Activated B cell treated with CpG ODN at 0.5 μM for 24 hours (primary cell): ENCODE measurements at regions of chr4 and their contacts with region 1.

Region 1: DNA sequence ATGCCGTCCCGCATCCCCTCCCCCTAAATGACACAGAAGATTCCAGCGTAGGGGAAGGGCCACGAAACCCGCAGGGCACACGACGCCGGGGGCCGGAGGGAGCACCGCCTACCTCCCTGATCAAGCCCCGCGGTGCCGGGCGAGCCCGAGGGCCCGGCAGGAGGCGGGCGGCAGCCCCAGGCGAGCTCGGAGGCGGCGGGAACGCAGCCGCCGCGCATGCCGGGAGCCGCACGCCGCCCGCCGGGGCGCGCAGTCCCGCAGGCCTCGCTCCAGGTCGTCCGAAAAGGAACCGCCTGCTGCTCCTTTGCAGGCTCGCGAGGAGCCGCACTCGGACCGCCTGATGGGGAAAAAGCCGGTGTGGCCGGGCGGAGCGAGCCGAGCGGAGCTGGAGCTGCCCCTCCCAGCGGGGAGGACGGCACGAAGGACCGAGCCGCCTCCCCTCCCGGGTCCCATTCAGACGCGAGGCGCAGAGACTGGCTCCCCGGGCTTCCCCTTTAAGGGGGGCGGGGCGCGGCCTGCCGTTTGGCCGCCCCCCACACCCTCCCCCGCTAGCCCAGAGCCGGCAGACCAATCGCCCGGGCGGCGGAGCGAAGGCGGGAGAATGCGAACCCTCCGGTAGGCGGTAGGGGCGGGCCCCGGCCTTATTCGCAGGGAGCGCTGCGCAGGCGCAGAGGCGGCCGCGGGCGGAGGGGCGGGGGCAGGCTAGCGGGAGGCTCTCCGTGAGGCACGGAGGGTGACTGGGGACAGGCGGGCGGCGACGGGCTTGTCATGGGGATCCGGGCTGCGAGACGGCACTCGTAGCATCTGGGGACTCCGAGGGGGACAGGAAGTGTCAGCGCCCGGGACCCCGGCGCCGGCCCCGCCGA is 561 bp upstream of the ING2 start:
- DNase-seq: peak; percentile 100
- ATAC-seq: peak; percentile 82
- H3K4me3 Mint-ChIP-seq: peak overlapping the region; percentile 96
- H3K27ac Mint-ChIP-seq: peak overlapping the region; percentile 90
- H3K4me1 Mint-ChIP-seq: peaks cover 14% of the 10 kb centered on the region
- H3K27me3 Mint-ChIP-seq: no peaks in the 10 kb centered on the region
- CTCF ChIP-seq: no peak

Region 2: GRCh38 chr4:183407128-183407585 is 97.1 kb before region 1 on chr4:
- CTCF ChIA-PET with region 1: interaction called, 4 read pairs
- POLR2A ChIA-PET with region 1: no interaction called
- intact Hi-C with region 1: loop called (anchors 1 kb)
- DNase-seq: peak; percentile 90
- ATAC-seq: peak; percentile 99
- H3K4me3 Mint-ChIP-seq: peak overlapping the region; percentile 79
- H3K27ac Mint-ChIP-seq: peak overlapping the region; percentile 35
- H3K4me1 Mint-ChIP-seq: peaks cover 15% of the 10 kb centered on the region
- H3K27me3 Mint-ChIP-seq: no peaks in the 10 kb centered on the region
- CTCF ChIP-seq: no peak

Region 3: GRCh38 chr4:183659029-183659871 is 155.0 kb after region 1 on chr4 and contains the starts of genes RWDD4 and TRAPPC11:
- CTCF ChIA-PET with region 1: interaction called, 3 read pairs
- POLR2A ChIA-PET with region 1: interaction called, 6 read pairs
- intact Hi-C with region 1: loop called (anchors 1 kb)
- DNase-seq: peak; percentile 87
- ATAC-seq: peak; percentile 98
- H3K4me3 Mint-ChIP-seq: peak within 1 kb of the TSS; percentile 93
- H3K27ac Mint-ChIP-seq: peak within 1 kb of the TSS; percentile 92
- H3K4me1 Mint-ChIP-seq: peaks cover 33% of the 10 kb centered on the region
- H3K27me3 Mint-ChIP-seq: no peaks in the 10 kb centered on the region
- CTCF ChIP-seq: no peak
- total RNA-seq, gene RWDD4: 14.6 and 15.4 TPM in 2 replicates
- total RNA-seq, gene TRAPPC11: 42.9 and 45.2 TPM in 2 replicates

Region 4: GRCh38 chr4:184417802-184418511 is 913.7 kb after region 1 on chr4:
- CTCF ChIA-PET with region 1: no interaction called
- POLR2A ChIA-PET with region 1: no interaction called
- intact Hi-C with region 1: loop called (anchors 10 kb)
- DNase-seq: no peak
- ATAC-seq: peak; percentile 65
- H3K4me3 Mint-ChIP-seq: peak overlapping the region; percentile 55
- H3K27ac Mint-ChIP-seq: peak overlapping the region; percentile 89
- H3K4me1 Mint-ChIP-seq: peaks cover 81% of the 10 kb centered on the region
- H3K27me3 Mint-ChIP-seq: no peaks in the 10 kb centered on the region
- CTCF ChIP-seq: no peak

Region 5: DNA sequence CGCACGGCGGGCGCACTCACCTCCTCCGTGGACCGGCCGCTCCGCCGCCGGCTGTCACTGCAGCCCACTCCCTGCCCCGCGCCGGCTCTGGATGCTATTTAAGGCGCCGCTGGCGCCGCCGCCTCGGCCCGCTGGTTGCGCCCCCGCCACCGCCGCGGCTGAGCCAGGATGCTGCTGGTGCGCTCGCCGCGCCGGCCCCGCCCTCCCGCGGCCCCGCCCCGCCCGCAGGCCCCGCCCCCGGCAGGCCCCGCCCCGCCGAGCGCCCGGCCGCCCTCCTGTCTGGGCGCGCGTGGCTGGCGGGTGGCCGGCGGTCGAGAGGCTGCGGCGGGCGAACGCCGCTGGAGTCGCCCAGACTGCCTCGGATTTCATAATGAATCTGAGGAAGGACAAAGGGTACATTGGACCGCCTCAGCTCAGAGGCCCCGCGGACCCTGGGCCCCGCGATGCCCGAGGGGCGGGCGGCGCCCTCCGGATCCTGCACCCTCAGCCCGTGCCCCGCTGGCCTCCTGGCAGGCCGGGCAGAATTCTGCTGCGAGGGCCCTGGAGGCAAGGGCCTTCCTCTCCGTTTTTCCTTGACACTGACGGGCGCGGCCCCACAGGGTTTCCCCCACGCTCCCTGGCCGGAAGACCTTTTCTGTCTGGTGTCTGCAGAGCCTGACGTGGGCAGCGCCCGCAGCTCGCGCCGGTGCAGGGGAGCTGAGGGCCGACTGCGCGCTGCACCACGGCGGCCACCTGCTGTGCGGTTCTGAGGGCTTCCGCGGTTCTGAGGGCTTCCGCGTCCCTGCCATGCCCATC is 1321.8 kb after region 1 on chr4 and contains the start of gene ACSL1:
- CTCF ChIA-PET with region 1: no interaction called
- POLR2A ChIA-PET with region 1: no interaction called
- intact Hi-C with region 1: loop called (anchors 10 kb)
- DNase-seq: peak; percentile 77
- ATAC-seq: peak; percentile 78
- H3K4me3 Mint-ChIP-seq: peak within 1 kb of the TSS; percentile 94
- H3K27ac Mint-ChIP-seq: peak within 1 kb of the TSS; percentile 91
- H3K4me1 Mint-ChIP-seq: peaks cover 42% of the 10 kb centered on the region
- H3K27me3 Mint-ChIP-seq: no peaks in the 10 kb centered on the region
- CTCF ChIP-seq: no peak
- total RNA-seq, gene ACSL1: 46.3 and 47.0 TPM in 2 replicates

Region 6: GRCh38 chr4:185203486-185204237 is 1699.4 kb after region 1 on chr4 and contains the start of gene CFAP97:
- CTCF ChIA-PET with region 1: no interaction called
- POLR2A ChIA-PET with region 1: no interaction called
- intact Hi-C with region 1: loop called (anchors 2 kb)
- DNase-seq: peak; percentile 82
- ATAC-seq: peak; percentile 81
- H3K4me3 Mint-ChIP-seq: peak within 1 kb of the TSS; percentile 93
- H3K27ac Mint-ChIP-seq: peak within 1 kb of the TSS; percentile 97
- H3K4me1 Mint-ChIP-seq: peaks cover 47% of the 10 kb centered on the region
- H3K27me3 Mint-ChIP-seq: no peaks in the 10 kb centered on the region
- CTCF ChIP-seq: no peak
- total RNA-seq, gene CFAP97: 42.6 and 44.1 TPM in 2 replicates